Caco-2 (cell line): ENCODE measurements at regions of chr2 and their contacts with region 1.

Region 1: DNA sequence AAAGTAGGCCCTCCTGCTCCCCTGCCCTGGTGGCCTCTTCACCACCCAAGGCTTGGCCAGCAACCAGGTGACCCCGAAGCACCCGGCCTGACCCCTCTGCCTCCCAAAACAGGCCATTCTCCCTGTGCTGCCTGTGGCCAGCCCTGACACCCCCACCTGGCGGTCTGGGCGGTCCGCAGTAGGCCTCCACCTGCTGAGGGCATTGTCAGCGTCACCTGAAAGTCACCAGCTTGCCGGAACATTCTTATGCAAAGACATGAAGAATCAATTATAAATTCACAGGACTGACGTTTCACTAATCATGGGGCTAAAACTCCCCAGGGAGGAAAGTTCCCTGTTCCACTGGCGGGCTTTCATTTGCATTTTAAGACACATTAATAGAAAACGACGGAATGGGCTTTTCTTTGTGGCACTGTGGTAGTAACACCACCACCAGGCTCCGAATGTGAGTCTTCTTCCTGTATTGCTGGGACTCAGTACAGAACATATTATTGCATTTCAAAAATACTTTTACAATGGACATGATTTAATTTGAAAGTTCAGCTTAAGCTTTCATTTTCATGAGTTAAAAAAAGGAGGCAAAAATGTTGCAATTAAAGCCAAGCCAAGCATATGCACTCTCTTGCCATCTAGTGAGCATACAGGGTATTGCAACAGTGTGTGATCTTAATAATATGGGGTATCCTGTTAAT is 57.4 kb downstream of the ADI1 start:
- DNase-seq: peak in 1 of 2 experiments; percentile 57
- H3K4me3 ChIP-seq: no peak overlapping the region
- H3K4me3 Mint-ChIP-seq: no peak overlapping the region
- H3K27ac Mint-ChIP-seq: no peak overlapping the region
- H3K4me1 ChIP-seq: peaks cover 20% of the 10 kb centered on the region
- H3K4me1 Mint-ChIP-seq: no peaks in the 10 kb centered on the region
- H3K27me3 ChIP-seq: no peaks in the 10 kb centered on the region
- H3K27me3 Mint-ChIP-seq: no peaks in the 10 kb centered on the region
- CTCF ChIP-seq: peak; percentile 74 to 84

Region 2: DNA sequence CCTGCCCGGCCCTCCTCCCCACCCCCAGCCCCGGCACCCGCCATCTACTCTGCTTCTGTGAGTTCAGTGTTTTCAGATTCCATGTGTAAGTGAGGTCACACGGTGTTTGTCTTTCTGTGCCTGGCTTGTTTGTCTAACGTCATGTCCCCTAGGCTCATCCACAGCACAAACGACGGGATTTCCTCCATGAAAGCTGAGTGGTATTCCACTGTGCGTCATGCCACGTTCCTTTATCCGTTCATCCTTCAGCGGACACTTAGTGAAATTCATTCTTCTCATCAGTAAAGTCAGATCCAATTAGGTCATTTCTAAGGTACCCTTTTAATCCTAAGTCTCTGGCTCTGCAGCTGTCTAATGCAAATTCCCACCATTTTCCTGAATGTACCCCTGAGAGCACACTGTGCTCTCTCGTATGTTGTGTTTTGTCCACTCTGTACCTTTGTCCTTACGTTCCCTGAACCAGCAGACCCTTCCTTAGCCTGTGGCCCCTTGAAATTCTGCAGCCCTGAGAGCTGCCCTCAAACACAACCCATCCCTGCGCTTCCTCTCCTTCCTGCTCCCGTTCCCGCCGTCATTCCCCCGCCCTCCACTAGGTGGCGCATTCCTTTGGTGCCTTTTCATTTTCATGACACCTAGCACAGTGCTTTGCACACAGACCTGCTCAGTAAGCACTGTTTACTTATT is 38.3 kb before region 1 on chr2:
- CTCF ChIA-PET with region 1: interaction called, 7 read pairs
- POLR2A ChIA-PET with region 1: interaction called, 3 read pairs
- intact Hi-C with region 1: loop called (anchors 1 kb)
- DNase-seq: peak; percentile 76 to 84
- H3K4me3 ChIP-seq: no peak overlapping the region
- H3K4me3 Mint-ChIP-seq: no peak overlapping the region
- H3K27ac Mint-ChIP-seq: no peak overlapping the region
- H3K4me1 ChIP-seq: 0 out of 2 replicates have a peak, but pooled peaks cover 3% of the 10 kb centered on the region
- H3K4me1 Mint-ChIP-seq: peaks cover 8% of the 10 kb centered on the region
- H3K27me3 ChIP-seq: no peaks in the 10 kb centered on the region
- H3K27me3 Mint-ChIP-seq: no peaks in the 10 kb centered on the region
- CTCF ChIP-seq: peak; percentile 90 to 97